B cell (primary cell): ENCODE measurements at regions of chr7 and their contacts with region 1.

Region 1: DNA sequence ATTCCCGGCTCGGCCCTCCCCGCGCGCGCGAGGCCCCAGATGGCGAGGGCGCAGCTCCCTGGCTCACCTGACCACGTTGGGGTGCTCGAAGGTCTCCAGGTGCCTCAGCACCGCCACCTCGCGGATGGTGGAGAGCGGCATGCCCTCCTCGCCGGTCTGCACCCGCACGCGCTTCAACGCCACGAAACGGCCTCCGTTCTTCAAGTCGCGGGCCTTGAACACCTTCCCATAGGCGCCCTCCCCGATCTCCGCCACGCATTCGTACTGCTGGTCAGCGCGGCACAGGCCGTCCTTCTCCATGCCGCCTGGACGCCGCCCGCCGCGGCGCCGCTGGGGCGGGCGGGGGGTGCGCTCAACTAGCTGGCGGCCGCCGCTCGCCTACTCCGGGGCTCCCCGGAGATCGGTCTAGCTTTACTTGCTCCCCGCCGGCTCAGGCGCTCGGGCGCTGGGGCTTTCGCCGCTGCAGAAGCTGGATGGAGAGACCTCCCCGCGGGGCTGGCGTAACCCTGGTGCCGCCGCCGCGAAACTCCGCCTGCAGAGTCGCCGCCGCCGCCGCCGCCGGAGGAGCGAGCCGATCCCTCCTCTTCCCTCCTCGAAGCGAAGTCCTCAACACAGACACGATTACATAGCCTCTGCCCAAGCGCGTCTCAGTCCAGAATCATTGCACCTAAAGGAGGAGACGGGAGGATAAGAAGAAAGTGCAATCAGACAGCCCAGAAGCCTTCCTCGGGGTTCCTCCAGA is 3.2 kb downstream of the CDK6 start:
- DNase-seq: peak; percentile 92
- ATAC-seq: peak; percentile 72
- H3K4me3 ChIP-seq: peak overlapping the region; percentile 88 to 96 (median 90)
- H3K4me3 Mint-ChIP-seq: peak overlapping the region; percentile 89
- H3K27ac ChIP-seq: peak overlapping the region; percentile 18 to 47
- H3K27ac Mint-ChIP-seq: peak overlapping the region; percentile 93
- H3K4me1 ChIP-seq: peaks cover 27 to 29% of the 10 kb centered on the region in 2 donors
- H3K4me1 Mint-ChIP-seq: peaks cover 40% of the 10 kb centered on the region
- H3K27me3 ChIP-seq: no peaks in the 10 kb centered on the region
- H3K27me3 Mint-ChIP-seq: no peaks in the 10 kb centered on the region
- CTCF ChIP-seq: peak; percentile 88

Region 2: DNA sequence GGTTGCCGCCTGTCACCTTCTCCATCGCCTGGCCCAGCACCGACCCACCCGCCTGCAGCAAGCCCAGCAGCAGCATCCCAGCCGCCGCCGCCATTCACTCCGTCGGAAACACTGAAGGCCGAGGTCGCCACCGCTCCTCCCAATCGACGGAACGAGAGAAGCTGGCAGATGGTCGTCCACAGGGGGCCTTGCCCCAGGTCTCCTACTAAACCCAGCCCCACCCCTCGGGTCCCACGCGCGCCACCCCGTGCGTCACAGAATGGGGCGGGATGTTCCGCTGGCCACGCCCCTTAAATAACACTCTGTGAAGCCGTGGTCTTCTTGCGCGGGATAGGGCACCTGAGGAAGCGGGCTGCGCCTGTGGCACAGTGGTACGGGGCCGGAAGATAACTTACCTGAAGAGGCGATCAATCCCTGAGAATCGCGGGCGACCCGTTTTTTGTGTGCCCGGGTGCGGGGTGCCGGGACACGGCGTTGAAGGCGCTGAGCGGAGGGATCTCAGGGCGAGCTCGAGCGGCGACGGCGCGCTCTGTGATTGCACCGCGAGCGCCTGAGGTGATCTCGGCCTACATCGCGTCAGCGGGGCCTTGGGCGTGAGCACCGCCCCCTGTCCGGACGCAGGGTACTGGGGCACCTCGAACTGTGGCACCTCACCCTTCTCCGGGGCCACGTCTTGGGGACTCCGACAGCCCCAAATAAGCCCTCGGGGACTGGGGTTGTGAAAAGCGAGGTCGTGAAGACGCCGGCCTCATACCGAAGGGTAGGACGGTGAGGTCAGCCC is 698.7 kb before region 1 on chr7 and contains the start of gene CYP51A1:
- CTCF ChIA-PET with region 1: no interaction called
- POLR2A ChIA-PET with region 1: no interaction called
- intact Hi-C with region 1: loop called (anchors 5 kb)
- DNase-seq: peak; percentile 99
- ATAC-seq: peak; percentile 84
- H3K4me3 ChIP-seq: peak within 1 kb of the TSS; percentile 86 to 94 (median 90)
- H3K4me3 Mint-ChIP-seq: peak within 1 kb of the TSS; percentile 99
- H3K27ac ChIP-seq: peak within 1 kb of the TSS; percentile 94 to 98
- H3K27ac Mint-ChIP-seq: peak within 1 kb of the TSS; percentile 100
- H3K4me1 ChIP-seq: peaks cover 18 to 27% of the 10 kb centered on the region in 2 donors
- H3K4me1 Mint-ChIP-seq: peaks cover 39% of the 10 kb centered on the region
- H3K27me3 ChIP-seq: no peaks in the 10 kb centered on the region
- H3K27me3 Mint-ChIP-seq: no peaks in the 10 kb centered on the region
- CTCF ChIP-seq: no peak
- total RNA-seq, gene CYP51A1: 36.1 and 37.9 TPM in 2 replicates

Region 3: GRCh38 chr7:92528188-92528957 is 304.8 kb before region 1 on chr7 and contains the starts of genes PEX1 and RBM48:
- CTCF ChIA-PET with region 1: interaction called, 5 read pairs
- POLR2A ChIA-PET with region 1: no interaction called
- intact Hi-C with region 1: loop called (anchors 1 kb)
- DNase-seq: peak; percentile 98
- ATAC-seq: peak; percentile 91
- H3K4me3 ChIP-seq: peak within 1 kb of the TSS; percentile 81 to 99 (median 95)
- H3K4me3 Mint-ChIP-seq: peak within 1 kb of the TSS; percentile 88
- H3K27ac ChIP-seq: peak within 1 kb of the TSS; percentile 89 to 96
- H3K27ac Mint-ChIP-seq: peak within 1 kb of the TSS; percentile 95
- H3K4me1 ChIP-seq: peaks cover 14 to 19% of the 10 kb centered on the region in 2 donors
- H3K4me1 Mint-ChIP-seq: peaks cover 26% of the 10 kb centered on the region
- H3K27me3 ChIP-seq: no peaks in the 10 kb centered on the region
- H3K27me3 Mint-ChIP-seq: no peaks in the 10 kb centered on the region
- CTCF ChIP-seq: peak; percentile 31
- total RNA-seq, gene PEX1: 33.7 and 34.8 TPM in 2 replicates
- total RNA-seq, gene RBM48: 32.9 and 36.8 TPM in 2 replicates

Region 4: GRCh38 chr7:92691578-92691977 is 141.6 kb before region 1 on chr7:
- CTCF ChIA-PET with region 1: interaction called, 15 read pairs
- POLR2A ChIA-PET with region 1: no interaction called
- intact Hi-C with region 1: loop called (anchors 1 kb)
- DNase-seq: peak; percentile 60
- ATAC-seq: peak; percentile 66
- H3K4me3 ChIP-seq: no peak overlapping the region
- H3K4me3 Mint-ChIP-seq: no peak overlapping the region
- H3K27ac ChIP-seq: no peak overlapping the region
- H3K27ac Mint-ChIP-seq: no peak overlapping the region
- H3K4me1 ChIP-seq: no peaks in the 10 kb centered on the region
- H3K4me1 Mint-ChIP-seq: peaks cover 6% of the 10 kb centered on the region
- H3K27me3 ChIP-seq: no peaks in the 10 kb centered on the region
- H3K27me3 Mint-ChIP-seq: no peaks in the 10 kb centered on the region
- CTCF ChIP-seq: peak; percentile 74

Region 5: GRCh38 chr7:92815412-92815811 is 17.8 kb before region 1 on chr7:
- CTCF ChIA-PET with region 1: interaction called, 16 read pairs
- POLR2A ChIA-PET with region 1: no interaction called
- intact Hi-C with region 1: loop called (anchors 2 kb)
- DNase-seq: no peak
- ATAC-seq: no peak
- H3K4me3 ChIP-seq: no peak overlapping the region
- H3K4me3 Mint-ChIP-seq: no peak overlapping the region
- H3K27ac ChIP-seq: no peak overlapping the region
- H3K27ac Mint-ChIP-seq: peak overlapping the region; percentile 8
- H3K4me1 ChIP-seq: peaks cover 8 to 13% of the 10 kb centered on the region in 2 donors
- H3K4me1 Mint-ChIP-seq: peaks cover 18% of the 10 kb centered on the region
- H3K27me3 ChIP-seq: no peaks in the 10 kb centered on the region
- H3K27me3 Mint-ChIP-seq: no peaks in the 10 kb centered on the region
- CTCF ChIP-seq: no peak

Region 6: GRCh38 chr7:93117852-93118530 is 284.8 kb after region 1 on chr7 and contains the start of gene SAMD9:
- CTCF ChIA-PET with region 1: interaction called, 5 read pairs
- POLR2A ChIA-PET with region 1: no interaction called
- intact Hi-C with region 1: loop called (anchors 5 kb)
- DNase-seq: peak; percentile 86
- ATAC-seq: peak; percentile 99
- H3K4me3 ChIP-seq: peak within 1 kb of the TSS; percentile 41 to 92 (median 59)
- H3K4me3 Mint-ChIP-seq: peak within 1 kb of the TSS; percentile 85
- H3K27ac ChIP-seq: peak within 1 kb of the TSS; percentile 56 to 83
- H3K27ac Mint-ChIP-seq: peak within 1 kb of the TSS; percentile 74
- H3K4me1 ChIP-seq: peaks cover 18 to 33% of the 10 kb centered on the region in 2 donors
- H3K4me1 Mint-ChIP-seq: peaks cover 44% of the 10 kb centered on the region
- H3K27me3 ChIP-seq: no peaks in the 10 kb centered on the region
- H3K27me3 Mint-ChIP-seq: no peaks in the 10 kb centered on the region
- CTCF ChIP-seq: no peak
- total RNA-seq, gene SAMD9: 39.2 and 42.1 TPM in 2 replicates